Naive thymus-derived CD8-positive, alpha-beta T cell (primary cell): ENCODE measurements at regions of chr18 and their contacts with region 1.

Region 1: DNA sequence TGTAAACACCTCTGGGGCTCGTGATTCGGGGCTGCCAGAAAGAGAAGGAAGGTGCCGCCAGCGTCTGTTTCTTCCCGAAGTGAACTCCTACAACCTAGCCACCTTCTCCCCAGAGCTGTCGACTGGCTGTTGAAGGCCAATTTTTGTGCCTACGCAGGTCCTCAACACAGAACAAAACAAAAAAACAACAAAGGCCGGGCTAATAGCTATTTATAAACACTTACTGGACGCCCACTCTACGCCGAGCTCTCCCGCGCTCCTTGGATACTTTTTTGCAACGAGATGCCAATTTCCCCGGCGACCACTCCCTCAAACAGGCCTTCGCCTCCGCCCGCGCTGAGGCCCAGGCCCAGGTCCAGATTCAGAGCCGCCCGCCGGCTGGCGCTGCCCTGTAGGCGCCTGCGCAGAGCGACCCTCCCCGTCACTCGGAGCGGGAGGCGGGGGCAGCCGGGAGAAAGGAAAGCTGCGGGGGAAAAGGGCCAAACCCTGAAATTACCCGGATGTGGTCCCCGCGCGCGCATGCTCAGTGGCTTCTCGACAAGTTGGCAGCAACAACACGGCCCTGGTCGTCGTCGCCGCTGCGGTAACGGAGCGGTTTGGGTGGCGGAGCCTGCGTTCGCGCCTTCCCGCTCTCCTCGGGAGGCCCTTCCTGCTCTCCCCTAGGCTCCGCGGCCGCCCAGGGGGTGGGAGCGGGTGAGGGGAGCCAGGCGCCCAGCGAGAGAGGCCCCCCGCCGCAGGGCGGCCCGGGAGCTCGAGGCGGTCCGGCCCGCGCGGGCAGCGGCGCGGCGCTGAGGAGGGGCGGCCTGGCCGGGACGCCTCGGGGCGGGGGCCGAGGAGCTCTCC is at the start of gene SMAD4:
- DNase-seq: peak; percentile 94 to 99 (median 98)
- ATAC-seq: peak; percentile 82 to 83
- H3K4me3 Mint-ChIP-seq: peak within 1 kb of the TSS; percentile 95 to 99 (median 96)
- H3K27ac Mint-ChIP-seq: peak within 1 kb of the TSS; percentile 96 to 99 (median 98)
- H3K4me1 Mint-ChIP-seq: peaks cover 36 to 69% (median 58%) of the 10 kb centered on the region in 4 donors
- H3K27me3 Mint-ChIP-seq: no peaks in the 10 kb centered on the region
- polyA plus RNA-seq, gene SMAD4: 46.0 to 69.2 (median 48.6) TPM

Region 2: DNA sequence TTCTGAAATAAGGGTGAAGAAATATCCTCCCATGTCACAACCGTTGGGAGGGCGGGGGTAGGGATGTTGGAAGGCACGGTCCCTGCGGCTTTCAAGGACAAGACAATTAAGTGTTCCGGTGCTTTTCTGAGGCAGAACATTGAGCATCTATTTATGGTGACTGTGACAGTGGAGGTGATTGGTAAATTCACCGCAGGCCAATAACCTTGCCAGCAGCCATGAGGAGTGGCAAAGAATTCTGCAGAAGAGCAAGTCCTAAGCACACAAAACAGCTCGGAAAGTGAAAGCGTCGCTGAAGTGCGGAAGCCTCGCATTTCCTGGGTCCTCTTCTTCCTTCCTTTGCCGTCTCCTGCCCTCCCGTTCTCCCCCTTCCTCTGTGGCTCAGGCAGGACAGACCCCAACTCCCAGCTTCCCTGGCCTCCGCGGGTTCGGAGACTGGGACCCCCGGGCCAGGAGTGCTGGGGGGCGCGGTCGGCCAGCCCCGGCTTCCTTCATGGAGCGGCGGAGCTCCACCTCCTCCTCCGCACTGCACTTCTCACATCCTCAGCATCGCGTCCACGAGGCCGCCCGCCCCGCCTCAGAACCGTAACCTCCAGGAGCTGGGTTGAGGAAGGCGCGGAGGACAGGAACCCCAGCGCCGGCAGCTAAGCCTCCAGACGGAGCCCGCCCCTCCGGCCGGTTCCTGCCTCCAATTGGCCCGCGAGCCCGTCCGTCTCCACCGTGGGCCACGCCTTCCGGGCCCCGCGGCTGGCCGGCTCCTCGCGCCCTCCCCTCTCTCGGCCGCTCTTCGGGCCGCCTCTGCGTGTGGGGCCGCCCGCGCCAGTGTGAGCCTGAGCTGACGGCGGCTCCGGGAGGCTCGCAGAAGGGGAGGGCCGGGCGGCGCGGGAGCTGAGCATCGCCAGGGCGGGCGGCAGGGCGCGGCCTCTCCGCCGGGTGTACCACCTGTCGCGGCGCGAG is 151.3 kb before region 1 on chr18 and contains the start of gene ME2:
- POLR2A ChIA-PET with region 1: interaction called, 69 read pairs
- DNase-seq: peak; percentile 77 to 94 (median 88)
- ATAC-seq: peak; percentile 88 to 90
- H3K4me3 Mint-ChIP-seq: peak within 1 kb of the TSS; percentile 91 to 99 (median 98)
- H3K27ac Mint-ChIP-seq: peak within 1 kb of the TSS; percentile 95 to 99 (median 98)
- H3K4me1 Mint-ChIP-seq: peaks cover 14 to 38% (median 32%) of the 10 kb centered on the region in 4 donors
- H3K27me3 Mint-ChIP-seq: peaks cover 0 to 3% (median 0%) of the 10 kb centered on the region in 5 donors
- polyA plus RNA-seq, gene ME2: 39.0 to 52.3 (median 42.0) TPM

Region 3: DNA sequence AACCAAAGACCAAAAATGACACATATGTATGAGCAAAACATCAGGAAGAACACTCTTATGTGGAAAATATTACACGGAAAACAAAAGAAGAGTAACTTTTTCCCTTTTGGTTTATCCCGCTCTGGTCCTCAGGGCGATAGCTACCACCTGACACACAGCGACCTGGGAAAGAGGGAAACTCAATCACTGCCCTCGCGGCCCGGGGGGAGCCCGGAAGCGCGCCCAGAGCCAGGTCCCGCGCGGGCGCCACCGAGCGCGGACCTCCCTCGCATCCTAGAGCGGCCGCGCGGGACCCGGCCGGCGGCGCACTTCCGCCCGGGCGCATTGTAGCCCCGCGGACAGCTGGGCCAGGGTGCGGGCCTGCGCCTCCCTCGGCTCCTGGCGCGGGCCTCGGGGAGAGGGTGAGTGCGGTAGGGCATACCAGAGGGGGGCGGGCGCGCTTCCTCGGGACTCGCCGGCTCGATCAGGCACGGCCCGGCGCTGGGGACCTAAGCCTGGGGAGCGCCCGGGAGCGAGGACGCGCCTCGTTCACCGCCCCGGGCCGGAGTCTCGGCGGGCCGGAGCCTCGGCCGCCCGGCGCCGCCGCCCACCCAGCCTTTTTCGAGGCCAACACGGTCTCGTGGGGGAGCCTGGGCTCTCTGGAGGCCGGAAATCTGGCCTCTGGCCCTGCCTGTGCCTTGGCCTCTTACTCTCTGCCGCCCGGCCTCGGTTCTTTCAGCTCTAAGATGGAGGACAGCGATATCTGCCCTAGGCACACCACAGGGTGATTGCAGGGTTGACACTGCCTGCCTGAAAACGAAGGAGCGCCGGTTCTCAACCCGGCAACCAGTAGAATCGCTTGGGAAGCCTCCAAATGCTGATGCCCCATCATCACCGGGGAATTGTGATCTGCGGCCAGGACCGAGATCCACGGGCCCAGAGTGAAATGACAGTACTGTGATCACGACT is 61.9 kb before region 1 on chr18 and contains the start of gene ELAC1:
- POLR2A ChIA-PET with region 1: interaction called, 84 read pairs
- DNase-seq: peak; percentile 32 to 75 (median 62)
- ATAC-seq: peak; percentile 87 to 89
- H3K4me3 Mint-ChIP-seq: peak within 1 kb of the TSS; percentile 72 to 97 (median 94)
- H3K27ac Mint-ChIP-seq: peak within 1 kb of the TSS; percentile 61 to 98 (median 96)
- H3K4me1 Mint-ChIP-seq: peaks cover 16 to 32% (median 25%) of the 10 kb centered on the region in 4 donors
- H3K27me3 Mint-ChIP-seq: no peaks in the 10 kb centered on the region
- polyA plus RNA-seq, gene ELAC1: 12.6 to 19.9 (median 15.0) TPM

Region 4: DNA sequence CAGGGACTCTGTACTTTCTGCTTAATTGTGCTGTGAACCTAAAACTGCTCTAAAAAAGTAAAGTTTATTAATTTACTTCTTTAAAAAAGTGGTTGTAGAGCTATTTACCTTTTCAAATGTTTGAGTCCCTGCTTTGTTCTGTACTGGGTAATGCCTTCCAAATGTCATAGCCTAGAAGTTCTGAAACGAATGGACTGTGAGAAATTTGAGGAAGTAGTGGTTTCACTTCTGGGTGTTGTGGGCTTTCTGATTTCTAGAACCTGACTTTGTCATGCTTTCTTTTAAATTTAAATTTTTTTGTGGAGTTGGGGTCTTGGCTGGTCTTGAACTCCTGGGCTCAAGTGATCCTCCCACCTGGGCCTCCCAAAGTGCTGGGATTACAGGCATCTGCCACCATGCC is 44.7 kb after region 1 on chr18:
- POLR2A ChIA-PET with region 1: no interaction called
- DNase-seq: no peak
- ATAC-seq: no peak
- H3K4me3 Mint-ChIP-seq: peak overlapping the region in 1 of 10 donors; percentile 12
- H3K27ac Mint-ChIP-seq: peak overlapping the region in 9 of 10 donors; percentile 15 to 82 (median 42)
- H3K4me1 Mint-ChIP-seq: peaks cover 13 to 47% (median 40%) of the 10 kb centered on the region in 4 donors
- H3K27me3 Mint-ChIP-seq: no peaks in the 10 kb centered on the region